Mammary epithelial cell (primary cell): ENCODE measurements at regions of chr1 and their contacts with region 1.

Region 1: DNA sequence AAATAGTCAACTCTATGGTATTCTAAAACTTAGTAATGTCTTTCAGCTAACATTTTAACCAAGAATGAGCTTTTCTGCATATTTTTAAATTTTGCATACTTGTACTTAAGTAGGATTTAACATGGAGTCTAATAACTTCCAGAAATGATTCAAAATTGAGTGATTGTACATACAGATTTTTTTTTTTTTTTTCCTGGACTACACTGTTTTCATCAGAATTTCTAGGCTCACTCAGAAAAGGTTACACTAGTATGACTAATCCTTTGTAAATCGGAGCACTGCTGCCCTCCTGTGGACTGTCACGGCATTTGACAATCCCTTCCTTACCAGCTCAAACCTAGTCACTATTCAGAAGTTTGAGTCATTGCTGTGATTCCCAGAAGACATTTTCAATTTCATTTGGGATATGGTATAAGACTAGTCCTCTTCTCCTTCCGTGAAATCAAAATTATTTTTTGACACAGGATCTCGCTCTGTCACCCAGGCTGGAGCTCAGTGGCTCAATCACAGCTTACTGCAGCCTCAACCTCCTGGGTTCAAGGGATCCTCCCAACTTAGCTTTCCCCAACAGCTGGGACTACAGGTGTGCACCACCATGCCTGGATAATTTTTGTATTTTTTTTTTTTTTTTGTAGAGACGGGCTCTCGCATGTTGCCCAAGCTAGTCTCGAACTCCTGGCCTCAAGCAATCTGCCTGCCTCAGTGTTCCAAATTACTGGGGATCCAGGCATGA is 45.5 kb downstream of the CD46 start:
- DNase-seq: peak; percentile 79
- H3K4me3 ChIP-seq: no peak overlapping the region
- H3K27ac ChIP-seq: no peak overlapping the region
- H3K4me1 ChIP-seq: no peaks in the 10 kb centered on the region
- H3K27me3 ChIP-seq: no peaks in the 10 kb centered on the region
- CTCF ChIP-seq: peak; percentile 80 to 85

Region 2: GRCh38 chr1:207654320-207654719 is 143.1 kb before region 1 on chr1:
- CTCF ChIA-PET with region 1: no interaction called
- dilution Hi-C with region 1: no loop called
- in situ Hi-C with region 1: no loop called
- intact Hi-C with region 1: loop called (anchors 10 kb)
- DNase-seq: no peak
- H3K4me3 ChIP-seq: no peak overlapping the region
- H3K27ac ChIP-seq: no peak overlapping the region
- H3K4me1 ChIP-seq: no peaks in the 10 kb centered on the region
- H3K27me3 ChIP-seq: no peaks in the 10 kb centered on the region
- CTCF ChIP-seq: peak; percentile 14 to 40

Region 3: DNA sequence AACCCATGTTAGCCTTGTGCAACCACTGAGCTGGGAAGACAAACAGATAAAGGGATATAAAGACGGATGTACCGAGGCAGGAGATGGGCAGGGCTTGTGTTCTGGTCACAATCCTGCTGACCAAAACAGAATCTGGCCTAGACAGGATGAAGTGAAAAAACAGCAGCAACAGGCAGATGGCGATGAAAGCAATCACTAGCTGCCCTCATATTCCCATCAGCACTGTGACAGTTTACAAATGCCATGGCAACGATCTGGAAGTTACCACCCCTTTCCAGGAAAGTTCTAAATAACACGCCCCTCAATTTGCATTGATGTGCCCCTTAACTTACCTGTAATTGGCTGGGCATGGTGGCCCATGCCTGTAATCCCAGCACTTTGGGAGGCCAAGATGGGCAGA is 86.1 kb before region 1 on chr1:
- CTCF ChIA-PET with region 1: interaction called, 21 read pairs
- dilution Hi-C with region 1: no loop called
- in situ Hi-C with region 1: no loop called
- intact Hi-C with region 1: loop called (anchors 5 kb)
- DNase-seq: peak; percentile 14
- H3K4me3 ChIP-seq: no peak overlapping the region
- H3K27ac ChIP-seq: no peak overlapping the region
- H3K4me1 ChIP-seq: peaks cover 15% of the 10 kb centered on the region
- H3K27me3 ChIP-seq: no peaks in the 10 kb centered on the region
- CTCF ChIP-seq: no peak

Region 4: GRCh38 chr1:207808322-207808705 is 10.9 kb after region 1 on chr1:
- CTCF ChIA-PET with region 1: interaction called, 14 read pairs
- dilution Hi-C with region 1: no loop called
- in situ Hi-C with region 1: no loop called
- intact Hi-C with region 1: no loop called
- DNase-seq: peak; percentile 86
- H3K4me3 ChIP-seq: no peak overlapping the region
- H3K27ac ChIP-seq: peak overlapping the region; percentile 96
- H3K4me1 ChIP-seq: peaks cover 58% of the 10 kb centered on the region
- H3K27me3 ChIP-seq: no peaks in the 10 kb centered on the region
- CTCF ChIP-seq: no peak

Region 5: GRCh38 chr1:208536176-208536575 is 738.8 kb after region 1 on chr1:
- CTCF ChIA-PET with region 1: interaction called, 15 read pairs
- dilution Hi-C with region 1: no loop called
- in situ Hi-C with region 1: no loop called
- intact Hi-C with region 1: no loop called
- DNase-seq: no peak
- H3K4me3 ChIP-seq: no peak overlapping the region
- H3K27ac ChIP-seq: no peak overlapping the region
- H3K4me1 ChIP-seq: peaks cover 5% of the 10 kb centered on the region
- H3K27me3 ChIP-seq: no peaks in the 10 kb centered on the region
- CTCF ChIP-seq: no peak